ENCODE measurements at regions of chr11 and their contacts with region 1.

Region 1: DNA sequence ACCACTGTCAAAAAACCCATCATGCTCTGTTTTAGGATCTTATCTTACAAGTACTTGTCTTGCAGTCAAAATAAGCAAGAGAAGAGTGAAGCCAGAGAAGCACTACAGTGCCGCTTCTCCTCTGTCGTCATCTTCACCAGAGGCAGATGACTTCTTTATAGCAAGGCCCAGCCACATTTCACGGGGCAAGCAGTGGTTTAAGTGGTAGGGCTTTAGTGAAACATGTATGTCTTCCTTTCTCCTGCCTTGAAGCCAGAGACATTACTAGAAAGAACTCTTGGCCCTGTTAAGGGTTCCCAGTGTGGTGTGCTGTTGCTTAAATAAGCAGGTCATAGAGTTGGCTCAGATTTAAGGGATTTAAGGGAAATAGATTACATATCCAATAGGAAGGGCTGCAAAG is 42.9 kb upstream of the DEPDC7 start:
- DNase-seq: no peak
- H3K4me3 ChIP-seq: no peak overlapping the region
- H3K4me1 ChIP-seq: no peaks in the 10 kb centered on the region
- H3K27me3 ChIP-seq: no peaks in the 10 kb centered on the region

Region 2: GRCh38 chr11:32487270-32487669 is 485.5 kb before region 1 on chr11:
- in situ Hi-C with region 1: no loop called
- DNase-seq: peak in 1 of 2 experiments; percentile 38
- H3K4me3 ChIP-seq: no peak overlapping the region
- H3K4me1 ChIP-seq: no peaks in the 10 kb centered on the region
- H3K27me3 ChIP-seq: no peaks in the 10 kb centered on the region

Region 3: DNA sequence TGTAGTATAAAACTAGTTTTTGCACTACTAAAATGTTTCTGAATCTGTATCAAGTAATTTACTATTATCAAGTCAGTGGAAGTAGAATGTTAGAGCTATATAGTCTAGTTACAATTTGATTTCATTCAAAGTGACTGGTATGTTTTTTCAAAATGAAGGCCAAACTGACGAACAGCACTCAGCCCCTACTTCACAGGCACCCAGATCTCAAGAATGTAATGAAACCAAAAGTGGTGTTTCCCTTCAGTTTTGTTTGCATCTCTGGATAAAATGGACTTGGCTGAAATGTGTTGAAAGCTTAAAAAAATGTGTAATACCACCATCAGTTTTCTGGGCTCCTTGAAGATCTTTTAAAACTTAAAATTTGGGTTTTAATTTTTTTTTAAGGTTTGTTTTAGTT is 33.7 kb before region 1 on chr11:
- in situ Hi-C with region 1: no loop called
- DNase-seq: no peak
- H3K4me3 ChIP-seq: no peak overlapping the region
- H3K4me1 ChIP-seq: peaks cover 30% of the 10 kb centered on the region
- H3K27me3 ChIP-seq: no peaks in the 10 kb centered on the region

Region 4: DNA sequence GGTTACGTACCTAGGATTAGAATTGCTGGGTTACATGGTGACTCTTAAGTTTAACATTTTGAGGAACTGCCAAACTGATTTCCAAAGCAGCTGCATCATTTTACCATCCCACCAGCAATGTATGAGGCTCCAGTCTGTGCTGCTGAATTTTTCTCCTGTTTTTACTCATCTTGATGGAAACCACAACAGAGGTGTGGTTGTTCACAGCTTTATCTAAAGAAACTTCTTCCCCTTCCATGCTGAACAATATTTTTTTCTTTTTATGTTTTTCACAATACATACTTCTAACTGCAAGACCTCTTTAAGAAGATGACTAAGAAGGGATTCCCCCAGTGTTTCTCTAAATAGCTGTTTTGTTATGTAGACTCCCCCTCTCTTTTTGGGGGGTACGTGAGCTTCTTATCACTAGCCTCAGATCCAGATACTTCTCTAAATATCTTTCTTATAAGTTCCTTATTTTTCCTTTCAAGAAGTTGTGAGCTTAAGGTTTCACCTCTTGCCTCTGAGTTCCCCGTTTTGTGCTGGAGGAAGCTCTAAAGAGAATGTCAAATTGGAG is 90.6 kb after region 1 on chr11:
- in situ Hi-C with region 1: loop called (anchors 5 kb)
- DNase-seq: no peak
- H3K4me3 ChIP-seq: no peak overlapping the region
- H3K4me1 ChIP-seq: no peaks in the 10 kb centered on the region
- H3K27me3 ChIP-seq: no peaks in the 10 kb centered on the region

Region 5: GRCh38 chr11:33195462-33196173 is 222.8 kb after region 1 on chr11:
- in situ Hi-C with region 1: no loop called
- DNase-seq: peak; percentile 67 to 76
- H3K4me3 ChIP-seq: no peak overlapping the region
- H3K4me1 ChIP-seq: peaks cover 12% of the 10 kb centered on the region
- H3K27me3 ChIP-seq: no peaks in the 10 kb centered on the region

Measured in HAP-1 (cell line).